ENCODE measurements at regions of chr16 and their contacts with region 1.

Region 1: DNA sequence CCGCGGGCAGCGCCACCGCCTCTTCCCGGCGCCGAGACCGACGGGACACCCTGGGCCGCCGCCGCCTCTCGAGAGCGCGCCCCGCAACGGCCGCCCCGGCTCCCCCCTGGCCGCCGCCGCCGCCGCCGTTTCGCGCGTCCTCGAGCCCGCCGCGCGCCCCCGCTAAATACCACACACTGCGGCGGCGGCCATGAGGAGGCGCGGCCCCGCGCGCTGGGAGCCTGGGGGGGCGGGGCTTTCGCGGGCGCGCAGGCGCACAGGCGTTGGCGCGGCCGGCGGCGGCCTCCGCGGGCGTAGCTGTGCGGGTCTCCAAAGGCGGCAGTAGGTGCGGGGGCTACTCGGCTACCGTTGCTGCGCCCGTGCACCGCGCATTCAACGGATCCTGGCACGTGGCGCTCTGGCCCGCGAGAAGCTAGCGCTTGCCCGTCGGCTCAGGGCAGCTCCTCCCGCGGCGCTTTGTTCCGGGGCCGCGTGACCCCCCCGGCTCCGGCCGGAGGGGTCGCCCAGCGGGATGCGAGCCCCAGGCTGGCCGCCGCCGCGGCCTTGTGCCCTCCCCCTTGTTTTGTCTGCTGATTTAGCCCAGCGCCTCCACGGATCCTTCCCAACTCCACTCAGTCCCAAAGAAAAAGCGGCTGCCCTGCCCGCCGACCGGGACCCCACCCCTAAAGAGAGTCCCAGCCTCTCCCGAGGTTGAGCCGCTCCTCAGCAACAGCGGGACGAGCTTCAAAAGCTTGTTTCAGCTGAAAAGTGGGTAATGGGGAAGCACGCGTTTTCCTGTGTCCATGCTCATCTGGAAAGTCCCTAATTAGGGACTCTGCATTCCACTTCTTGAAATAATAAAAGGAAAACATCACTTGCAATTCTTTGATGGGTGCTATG is at the start of gene SIAH1:
- DNase-seq: peak; percentile 86
- H3K4me3 Mint-ChIP-seq: peak within 1 kb of the TSS; percentile 94
- H3K27ac Mint-ChIP-seq: peak within 1 kb of the TSS; percentile 92
- H3K4me1 Mint-ChIP-seq: peaks cover 23% of the 10 kb centered on the region
- H3K27me3 Mint-ChIP-seq: no peaks in the 10 kb centered on the region
- total RNA-seq, gene SIAH1: 16.2 and 17.0 TPM in 2 replicates

Region 2: GRCh38 chr16:48365581-48366164 is 19.8 kb before region 1 on chr16:
- intact Hi-C with region 1: loop called (anchors 1 kb)
- DNase-seq: peak; percentile 78
- H3K4me3 Mint-ChIP-seq: peak overlapping the region; percentile 89
- H3K27ac Mint-ChIP-seq: peak overlapping the region; percentile 95
- H3K4me1 Mint-ChIP-seq: peaks cover 53% of the 10 kb centered on the region
- H3K27me3 Mint-ChIP-seq: no peaks in the 10 kb centered on the region

Region 3: DNA sequence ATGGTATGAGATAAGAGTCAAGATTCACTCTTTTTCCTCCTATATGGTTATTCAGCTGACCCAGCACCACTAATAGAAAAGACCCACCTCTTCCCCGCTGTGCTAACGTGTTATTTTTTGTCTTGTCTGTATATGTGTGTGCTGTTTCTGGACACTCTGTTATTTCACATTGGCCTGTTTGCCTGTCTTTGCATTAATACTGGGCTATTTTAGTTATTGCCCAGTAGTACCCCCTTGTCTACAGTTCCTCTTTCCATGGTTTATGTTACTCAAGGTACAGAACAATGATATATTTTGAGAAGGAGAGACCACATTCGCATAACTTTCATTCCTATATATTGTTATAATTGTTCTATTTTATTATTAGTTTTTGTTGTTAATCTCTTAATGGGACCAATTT is 73.7 kb after region 1 on chr16:
- intact Hi-C with region 1: loop called (anchors 5 kb)
- DNase-seq: no peak
- H3K4me3 Mint-ChIP-seq: no peak overlapping the region
- H3K27ac Mint-ChIP-seq: no peak overlapping the region
- H3K4me1 Mint-ChIP-seq: peaks cover 15% of the 10 kb centered on the region
- H3K27me3 Mint-ChIP-seq: peaks cover 39% of the 10 kb centered on the region

Measured in activated T-helper 2 cell treated with anti-CD3 and anti-CD28 coated beads, Interferon-gamma antibody, Interleukin-2, Interleukin-4, amounts not matched to agents 10 μg/mL and 5 μg/mL and 100 μg/mL, durations not matched to agents 14 hours and 24 hours and 36 hours (primary cell).